HEK293 (cell line): ENCODE measurements at regions of chr3 and their contacts with region 1.

Region 1: GRCh38 chr3:15268033-15268631 is 62.1 kb downstream of the CAPN7 start:
- H3K4me3 ChIP-seq: no peak overlapping the region
- H3K27ac ChIP-seq: no peak overlapping the region
- H3K4me1 ChIP-seq: peaks cover 5% of the 10 kb centered on the region; the same call in 1 of the 2 replicates
- CTCF ChIP-seq: peak; percentile 73

Region 2: DNA sequence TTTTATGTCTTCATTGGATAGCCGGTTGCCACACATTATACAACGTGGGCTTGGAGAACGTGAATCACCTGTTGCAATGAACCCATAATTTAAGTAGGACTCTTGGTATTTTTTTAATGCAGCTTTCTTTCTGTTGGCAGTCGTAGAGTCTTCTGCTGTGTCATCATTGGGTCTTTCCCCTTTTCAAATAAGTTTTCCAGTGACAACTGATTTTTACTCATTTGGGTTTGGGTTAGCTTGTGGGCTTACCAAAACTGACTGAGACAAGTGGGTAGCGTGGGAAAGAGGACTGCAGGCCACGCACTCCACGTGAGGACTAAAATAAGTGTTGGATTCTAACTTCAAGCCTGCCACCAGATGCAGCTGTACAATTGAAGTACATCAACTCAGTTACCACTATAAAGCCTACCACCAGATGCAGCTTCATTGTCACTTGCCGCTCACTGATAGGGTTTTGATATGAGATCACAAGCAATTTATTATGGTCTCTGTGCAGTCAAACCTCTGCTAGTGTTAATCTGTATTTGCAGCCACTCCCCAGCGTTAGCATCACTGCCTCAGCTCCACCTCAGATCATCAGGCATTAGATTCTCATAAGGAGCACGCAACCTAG is 68.5 kb before region 1 on chr3:
- CTCF ChIA-PET with region 1: interaction called, 30 read pairs
- POLR2A ChIA-PET with region 1: no interaction called
- H3K4me3 ChIP-seq: no peak overlapping the region
- H3K27ac ChIP-seq: no peak overlapping the region
- H3K4me1 ChIP-seq: no peaks in the 10 kb centered on the region
- CTCF ChIP-seq: no peak

Region 3: DNA sequence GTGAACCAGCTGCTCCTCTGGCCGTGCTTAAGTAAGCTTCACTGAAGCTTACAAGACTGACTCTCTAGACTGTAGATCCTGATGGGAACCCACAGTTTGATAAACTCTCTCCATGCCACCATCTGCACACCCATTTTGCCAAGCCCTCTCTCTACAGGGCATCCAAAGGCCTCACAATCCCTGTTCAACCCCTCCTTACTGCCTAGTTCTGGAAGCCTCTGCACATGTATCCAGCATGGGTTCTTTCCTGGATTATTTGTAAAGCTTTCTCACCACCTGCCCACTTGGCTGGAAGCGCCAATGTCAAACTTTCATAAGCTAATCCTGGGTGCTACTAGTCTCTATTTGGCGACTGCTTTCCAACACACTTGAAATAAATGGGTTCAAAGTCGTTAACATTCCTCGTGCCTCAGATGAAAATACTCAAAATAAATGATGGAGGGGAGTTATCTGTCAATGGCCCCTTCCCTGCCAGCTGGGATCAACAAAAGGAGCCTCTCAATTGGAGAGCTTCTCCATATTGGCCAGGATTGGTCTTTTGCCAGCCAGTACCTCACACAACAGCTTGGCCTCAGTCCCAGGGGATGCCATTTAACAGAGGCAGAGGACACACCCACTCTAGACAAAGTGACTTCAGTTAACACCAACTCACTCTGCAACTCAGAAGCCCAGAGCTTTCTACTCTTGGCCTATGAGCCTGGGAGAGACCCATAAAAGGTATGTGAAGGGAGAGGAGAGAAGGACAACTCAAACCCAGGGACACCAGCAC is 16.2 kb after region 1 on chr3:
- CTCF ChIA-PET with region 1: interaction called, 19 read pairs
- POLR2A ChIA-PET with region 1: interaction called, 5 read pairs
- H3K4me3 ChIP-seq: no peak overlapping the region
- H3K27ac ChIP-seq: no peak overlapping the region
- H3K4me1 ChIP-seq: peaks cover 4% of the 10 kb centered on the region; the same call in 1 of the 2 replicates
- CTCF ChIP-seq: no peak

Region 4: GRCh38 chr3:15332405-15333098 is 64.4 kb after region 1 on chr3 and contains the start of gene SH3BP5:
- CTCF ChIA-PET with region 1: interaction called, 47 read pairs
- POLR2A ChIA-PET with region 1: interaction called, 10 read pairs
- H3K4me3 ChIP-seq: peak within 1 kb of the TSS; percentile 79
- H3K27ac ChIP-seq: peak within 1 kb of the TSS; percentile 24; the same call in 1 of the 2 replicates
- H3K4me1 ChIP-seq: peaks cover 14% of the 10 kb centered on the region
- CTCF ChIP-seq: peak; percentile 36; the same call in 1 of the 2 replicates

Region 5: GRCh38 chr3:15377961-15378791 is 110.0 kb after region 1 on chr3:
- CTCF ChIA-PET with region 1: interaction called, 58 read pairs
- POLR2A ChIA-PET with region 1: interaction called, 3 read pairs
- H3K4me3 ChIP-seq: no peak overlapping the region
- H3K27ac ChIP-seq: no peak overlapping the region
- H3K4me1 ChIP-seq: no peaks in the 10 kb centered on the region
- CTCF ChIP-seq: peak; percentile 74

Region 6: GRCh38 chr3:15405448-15406050 is 137.4 kb after region 1 on chr3:
- CTCF ChIA-PET with region 1: interaction called, 109 read pairs
- POLR2A ChIA-PET with region 1: interaction called, 3 read pairs
- H3K4me3 ChIP-seq: no peak overlapping the region
- H3K27ac ChIP-seq: no peak overlapping the region
- H3K4me1 ChIP-seq: no peaks in the 10 kb centered on the region
- CTCF ChIP-seq: no peak